ENCODE measurements at regions of chr16 and their contacts with region 1.

Region 1: GRCh38 chr16:75495076-75495674 is at the start of gene CHST6:
- DNase-seq: no peak
- ATAC-seq: no peak
- H3K4me3 ChIP-seq: no peak within 1 kb of the TSS
- H3K27ac ChIP-seq: no peak within 1 kb of the TSS
- H3K4me1 ChIP-seq: peaks cover 5% of the 10 kb centered on the region; the same call in 1 of the 2 replicates
- H3K27me3 ChIP-seq: no peaks in the 10 kb centered on the region
- CTCF ChIP-seq: no peak
- total RNA-seq, gene CHST6: 0.35 and 0.91 TPM in 2 replicates

Region 2: GRCh38 chr16:75443298-75443697 is 51.9 kb before region 1 on chr16:
- CTCF ChIA-PET with region 1: interaction called, 16 read pairs
- POLR2A ChIA-PET with region 1: no interaction called
- intact Hi-C with region 1: no loop called
- DNase-seq: no peak
- ATAC-seq: no peak
- H3K4me3 ChIP-seq: no peak overlapping the region
- H3K27ac ChIP-seq: no peak overlapping the region
- H3K4me1 ChIP-seq: no peaks in the 10 kb centered on the region
- H3K27me3 ChIP-seq: no peaks in the 10 kb centered on the region
- CTCF ChIP-seq: no peak

Region 3: GRCh38 chr16:75931043-75931442 is 435.9 kb after region 1 on chr16:
- CTCF ChIA-PET with region 1: no interaction called
- POLR2A ChIA-PET with region 1: no interaction called
- intact Hi-C with region 1: no loop called
- DNase-seq: peak; percentile 33
- ATAC-seq: no peak
- H3K4me3 ChIP-seq: no peak overlapping the region
- H3K27ac ChIP-seq: no peak overlapping the region
- H3K4me1 ChIP-seq: no peaks in the 10 kb centered on the region
- H3K27me3 ChIP-seq: peaks cover 42% of the 10 kb centered on the region
- CTCF ChIP-seq: no peak

Measured in PC-3 (cell line).